ENCODE measurements at regions of chrX and their contacts with region 1.

Region 1: GRCh38 chrX:71181910-71182799 is 37.5 kb downstream of the NLGN3 start:
- DNase-seq: peak; percentile 56 to 94 (median 78)
- ATAC-seq: peak; percentile 92
- H3K4me3 ChIP-seq: peak overlapping the region; percentile 66 to 74
- H3K4me3 Mint-ChIP-seq: peak overlapping the region; percentile 96
- H3K27ac ChIP-seq: peak overlapping the region; percentile 78 to 97
- H3K27ac Mint-ChIP-seq: peak overlapping the region; percentile 100
- H3K4me1 ChIP-seq: peaks cover 7% of the 10 kb centered on the region
- H3K4me1 Mint-ChIP-seq: peaks cover 15% of the 10 kb centered on the region
- H3K27me3 ChIP-seq: no peaks in the 10 kb centered on the region
- H3K27me3 Mint-ChIP-seq: no peaks in the 10 kb centered on the region
- CTCF ChIP-seq: no peak

Region 2: GRCh38 chrX:70476934-70477733 is 705.0 kb before region 1 on chrX:
- CTCF ChIA-PET with region 1: no interaction called
- POLR2A ChIA-PET with region 1: no interaction called
- intact Hi-C with region 1: loop called in 1 of 2 experiments (anchors 5 kb)
- DNase-seq: no peak
- ATAC-seq: no peak
- H3K4me3 ChIP-seq: no peak overlapping the region
- H3K4me3 Mint-ChIP-seq: no peak overlapping the region
- H3K27ac ChIP-seq: no peak overlapping the region
- H3K27ac Mint-ChIP-seq: no peak overlapping the region
- H3K4me1 ChIP-seq: no peaks in the 10 kb centered on the region
- H3K4me1 Mint-ChIP-seq: no peaks in the 10 kb centered on the region
- H3K27me3 ChIP-seq: no peaks in the 10 kb centered on the region
- H3K27me3 Mint-ChIP-seq: no peaks in the 10 kb centered on the region
- CTCF ChIP-seq: no peak

Region 3: DNA sequence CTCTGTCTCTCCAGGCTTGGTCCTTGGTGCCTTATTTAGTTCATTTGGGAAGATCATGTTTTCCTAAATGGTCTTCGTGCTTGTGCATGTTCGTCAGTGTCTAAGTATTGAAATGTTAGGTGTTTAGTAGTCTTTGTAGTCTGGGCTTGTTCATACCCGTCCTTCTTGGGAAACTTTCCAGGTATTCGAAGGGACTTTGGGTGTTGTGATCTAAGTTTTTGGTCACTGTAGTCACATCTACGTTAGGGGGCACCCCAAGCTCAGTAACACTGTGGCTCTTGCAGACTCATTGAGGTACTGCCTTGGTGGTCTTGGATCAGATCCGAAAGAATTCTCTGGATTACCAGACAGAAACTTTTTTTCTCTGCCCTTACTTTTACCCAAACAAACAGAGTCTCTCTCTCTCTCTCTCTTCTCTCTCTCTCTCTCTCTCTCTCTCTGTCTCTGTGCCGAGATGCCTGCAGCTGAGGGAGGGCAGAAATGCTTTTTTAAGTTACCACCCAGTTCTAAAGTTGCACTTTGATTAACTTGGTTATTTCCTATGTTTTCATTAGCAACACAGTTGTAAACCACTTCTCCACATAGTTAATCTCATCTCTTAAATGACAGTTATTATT is 183.6 kb before region 1 on chrX:
- CTCF ChIA-PET with region 1: interaction called, 6 read pairs
- POLR2A ChIA-PET with region 1: no interaction called
- intact Hi-C with region 1: loop called in 1 of 2 experiments (anchors 1 kb)
- DNase-seq: peak in 6 of 9 experiments; percentile 0 to 52 (median 22)
- ATAC-seq: no peak
- H3K4me3 ChIP-seq: no peak overlapping the region
- H3K4me3 Mint-ChIP-seq: no peak overlapping the region
- H3K27ac ChIP-seq: no peak overlapping the region
- H3K27ac Mint-ChIP-seq: no peak overlapping the region
- H3K4me1 ChIP-seq: no peaks in the 10 kb centered on the region
- H3K4me1 Mint-ChIP-seq: peaks cover 6% of the 10 kb centered on the region
- H3K27me3 ChIP-seq: no peaks in the 10 kb centered on the region
- H3K27me3 Mint-ChIP-seq: no peaks in the 10 kb centered on the region
- CTCF ChIP-seq: no peak

Region 4: DNA sequence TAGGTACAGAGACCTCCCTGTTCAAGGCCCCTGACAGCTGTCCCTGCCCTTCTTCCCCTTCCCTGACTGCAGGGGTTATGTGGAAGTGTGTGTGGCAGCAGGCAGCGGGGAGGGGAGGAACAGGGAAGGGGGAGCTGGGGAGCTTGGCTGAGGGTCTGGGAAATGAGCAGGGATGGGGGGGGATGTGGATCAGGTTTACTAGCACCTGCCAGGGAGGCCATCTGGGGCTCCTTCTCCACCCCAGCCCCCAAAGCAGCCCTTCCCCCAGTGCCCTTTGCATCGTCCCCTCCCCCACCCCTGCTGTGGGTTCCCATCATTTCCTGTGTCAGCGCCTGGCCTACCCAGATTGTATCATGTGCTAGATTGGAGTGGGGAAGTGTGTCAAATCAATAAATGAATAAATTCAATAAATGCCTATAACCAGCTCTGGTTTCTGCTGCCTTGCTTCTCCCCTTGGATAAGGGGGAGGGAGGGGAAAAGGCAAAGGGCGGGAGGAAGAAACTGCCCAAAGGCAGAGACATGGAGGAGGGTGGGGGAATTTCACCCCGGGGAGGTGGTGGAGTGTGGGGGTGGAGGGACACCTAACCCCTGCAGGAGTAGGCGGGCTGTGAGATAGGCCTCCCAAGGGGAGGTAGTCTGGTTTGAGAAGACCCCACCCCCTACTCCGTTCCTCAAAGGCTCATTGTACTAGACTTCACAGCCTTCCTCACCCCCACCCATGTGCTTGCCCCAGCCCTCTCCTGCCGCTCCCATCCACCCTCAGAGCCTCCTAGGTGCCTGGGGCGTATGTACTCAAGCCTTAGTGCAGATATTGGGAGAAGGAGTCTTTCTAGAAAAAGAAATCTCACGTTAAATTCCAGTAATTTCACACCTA is 78.8 kb before region 1 on chrX:
- CTCF ChIA-PET with region 1: interaction called, 11 read pairs
- POLR2A ChIA-PET with region 1: interaction called, 11 read pairs
- intact Hi-C with region 1: loop called (anchors 2 kb)
- DNase-seq: peak in 7 of 9 experiments; percentile 51 to 83 (median 69)
- ATAC-seq: peak; percentile 41
- H3K4me3 ChIP-seq: peak overlapping the region; percentile 23 to 31
- H3K4me3 Mint-ChIP-seq: peak overlapping the region; percentile 80
- H3K27ac ChIP-seq: peak overlapping the region; percentile 62 to 100
- H3K27ac Mint-ChIP-seq: peak overlapping the region; percentile 96
- H3K4me1 ChIP-seq: peaks cover 85% of the 10 kb centered on the region
- H3K4me1 Mint-ChIP-seq: peaks cover 83% of the 10 kb centered on the region
- H3K27me3 ChIP-seq: no peaks in the 10 kb centered on the region
- H3K27me3 Mint-ChIP-seq: no peaks in the 10 kb centered on the region
- CTCF ChIP-seq: no peak

Region 5: DNA sequence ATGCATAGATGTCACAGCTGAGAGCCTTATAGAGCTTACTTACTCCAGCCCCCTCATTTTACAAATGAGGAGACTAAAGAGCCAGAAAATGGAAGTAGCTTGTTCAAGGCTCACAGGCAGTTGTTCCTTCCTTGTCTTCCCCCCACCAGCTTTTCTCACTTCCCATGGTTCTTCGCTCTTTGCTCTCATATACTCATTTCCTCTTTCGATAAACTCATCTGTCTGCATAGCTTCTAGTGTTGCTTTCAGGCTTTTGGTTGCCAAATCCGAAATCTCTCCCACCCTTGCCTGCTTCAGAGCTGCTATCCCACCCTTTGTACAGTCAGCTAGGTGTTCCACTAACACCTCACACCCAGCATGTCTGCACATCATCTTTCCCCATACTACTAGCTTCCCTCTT is 15.9 kb after region 1 on chrX:
- CTCF ChIA-PET with region 1: interaction called, 6 read pairs
- POLR2A ChIA-PET with region 1: interaction called, 9 read pairs
- intact Hi-C with region 1: loop called (anchors 1 to 2 kb)
- DNase-seq: peak in 2 of 9 experiments; percentile 23 to 54
- ATAC-seq: peak; percentile 43
- H3K4me3 ChIP-seq: peak overlapping the region; percentile 52 to 53
- H3K4me3 Mint-ChIP-seq: peak overlapping the region; percentile 92
- H3K27ac ChIP-seq: peak overlapping the region; percentile 48 to 79
- H3K27ac Mint-ChIP-seq: peak overlapping the region; percentile 97
- H3K4me1 ChIP-seq: peaks cover 4% of the 10 kb centered on the region
- H3K4me1 Mint-ChIP-seq: peaks cover 33% of the 10 kb centered on the region
- H3K27me3 ChIP-seq: no peaks in the 10 kb centered on the region
- H3K27me3 Mint-ChIP-seq: no peaks in the 10 kb centered on the region
- CTCF ChIP-seq: no peak

Region 6: DNA sequence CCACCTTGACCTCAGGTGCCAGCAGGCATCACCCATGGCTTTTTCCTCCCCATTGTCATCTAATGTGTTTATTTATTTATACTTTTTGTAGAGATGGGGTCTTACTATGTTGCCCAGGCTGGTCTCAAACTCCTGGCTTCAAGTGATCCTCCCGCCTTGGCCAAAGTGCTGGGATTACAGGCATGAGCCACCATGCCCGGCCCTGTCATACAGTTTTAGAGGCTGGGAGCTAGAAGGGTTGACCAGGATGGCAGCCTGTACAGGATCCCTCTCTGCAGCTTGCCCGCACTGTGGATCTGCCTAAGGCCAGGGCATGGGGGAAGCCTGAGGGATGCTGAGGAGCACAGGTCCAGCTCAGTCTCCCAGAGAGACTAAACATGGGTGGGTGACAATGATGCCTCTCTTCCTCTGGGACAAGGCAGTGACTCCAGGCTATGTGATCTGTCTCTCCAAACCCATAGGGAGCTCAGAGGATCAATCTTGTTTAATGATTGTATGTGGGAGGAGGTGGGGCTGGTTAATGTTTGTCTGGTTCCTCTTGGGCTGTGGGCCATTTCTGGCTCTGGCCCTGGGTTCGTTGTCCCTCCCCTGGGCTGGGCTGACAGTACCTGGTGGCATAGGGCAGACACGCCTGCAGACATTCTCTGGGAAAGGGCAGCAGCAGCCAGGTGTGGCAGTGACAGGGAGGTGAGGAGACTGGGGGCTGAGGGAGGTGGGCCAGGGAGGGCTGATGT is 32.6 kb after region 1 on chrX:
- CTCF ChIA-PET with region 1: no interaction called
- POLR2A ChIA-PET with region 1: no interaction called
- intact Hi-C with region 1: no loop called
- DNase-seq: no peak
- ATAC-seq: no peak
- H3K4me3 ChIP-seq: no peak overlapping the region
- H3K4me3 Mint-ChIP-seq: no peak overlapping the region
- H3K27ac ChIP-seq: no peak overlapping the region
- H3K27ac Mint-ChIP-seq: no peak overlapping the region
- H3K4me1 ChIP-seq: no peaks in the 10 kb centered on the region
- H3K4me1 Mint-ChIP-seq: peaks cover 7% of the 10 kb centered on the region
- H3K27me3 ChIP-seq: no peaks in the 10 kb centered on the region
- H3K27me3 Mint-ChIP-seq: no peaks in the 10 kb centered on the region
- CTCF ChIP-seq: no peak

Region 7: DNA sequence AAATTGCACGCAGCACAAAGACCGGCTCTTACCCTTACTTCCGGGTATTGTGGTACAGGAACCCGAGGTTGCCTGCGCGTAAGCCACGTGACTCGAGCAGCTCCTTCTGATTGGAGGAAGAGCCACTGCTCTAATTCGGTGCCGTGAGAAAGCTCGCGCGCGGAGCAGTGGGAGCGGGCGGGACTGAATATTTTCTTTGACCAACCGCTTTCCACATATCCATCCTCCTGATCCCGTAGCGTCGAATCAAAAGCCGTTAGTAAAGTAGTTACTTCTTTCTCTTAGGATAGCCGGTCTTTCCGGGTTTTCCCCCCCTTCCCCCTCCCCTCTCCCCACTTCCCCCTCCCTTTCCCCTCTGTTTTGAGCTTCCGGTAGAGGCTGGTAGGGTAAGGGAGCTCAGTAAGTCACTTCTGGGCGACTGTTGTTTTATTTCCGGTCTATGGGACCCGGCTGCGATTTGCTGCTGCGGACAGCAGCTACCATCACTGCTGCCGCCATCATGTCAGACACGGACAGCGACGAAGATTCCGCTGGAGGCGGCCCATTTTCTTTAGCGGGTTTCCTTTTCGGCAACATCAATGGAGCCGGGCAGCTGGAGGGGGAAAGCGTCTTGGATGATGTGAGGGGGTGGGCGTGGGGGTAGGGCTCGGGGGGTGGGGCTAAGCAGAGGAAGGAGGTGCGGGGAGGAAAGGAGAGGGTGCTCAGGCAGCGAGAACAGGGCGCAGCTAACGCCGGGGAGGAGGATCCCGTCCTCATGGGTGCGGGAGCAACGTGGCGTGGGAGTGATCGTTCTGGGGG is 183.9 kb after region 1 on chrX and contains the start of gene TAF1:
- CTCF ChIA-PET with region 1: no interaction called
- POLR2A ChIA-PET with region 1: interaction called, 26 read pairs
- intact Hi-C with region 1: loop called (anchors 1 to 2 kb)
- DNase-seq: peak; percentile 76 to 97 (median 88)
- ATAC-seq: peak; percentile 86
- H3K4me3 ChIP-seq: peak within 1 kb of the TSS; percentile 85 to 95
- H3K4me3 Mint-ChIP-seq: peak within 1 kb of the TSS; percentile 98
- H3K27ac ChIP-seq: peak within 1 kb of the TSS; percentile 87 to 91
- H3K27ac Mint-ChIP-seq: peak within 1 kb of the TSS; percentile 100
- H3K4me1 ChIP-seq: peaks cover 14% of the 10 kb centered on the region
- H3K4me1 Mint-ChIP-seq: peaks cover 28% of the 10 kb centered on the region
- H3K27me3 ChIP-seq: no peaks in the 10 kb centered on the region
- H3K27me3 Mint-ChIP-seq: no peaks in the 10 kb centered on the region
- CTCF ChIP-seq: no peak
- total RNA-seq, gene TAF1: 48.2 to 61.3 TPM

Region 8: GRCh38 chrX:71378732-71379131 is 196.6 kb after region 1 on chrX:
- CTCF ChIA-PET with region 1: no interaction called
- POLR2A ChIA-PET with region 1: no interaction called
- intact Hi-C with region 1: no loop called
- DNase-seq: no peak
- ATAC-seq: no peak
- H3K4me3 ChIP-seq: no peak overlapping the region
- H3K4me3 Mint-ChIP-seq: no peak overlapping the region
- H3K27ac ChIP-seq: no peak overlapping the region
- H3K27ac Mint-ChIP-seq: no peak overlapping the region
- H3K4me1 ChIP-seq: no peaks in the 10 kb centered on the region
- H3K4me1 Mint-ChIP-seq: peaks cover 4% of the 10 kb centered on the region
- H3K27me3 ChIP-seq: no peaks in the 10 kb centered on the region
- H3K27me3 Mint-ChIP-seq: no peaks in the 10 kb centered on the region
- CTCF ChIP-seq: no peak